Motor neuron (in vitro differentiated cells): ENCODE measurements at regions of chr13 and their contacts with region 1.

Region 1: DNA sequence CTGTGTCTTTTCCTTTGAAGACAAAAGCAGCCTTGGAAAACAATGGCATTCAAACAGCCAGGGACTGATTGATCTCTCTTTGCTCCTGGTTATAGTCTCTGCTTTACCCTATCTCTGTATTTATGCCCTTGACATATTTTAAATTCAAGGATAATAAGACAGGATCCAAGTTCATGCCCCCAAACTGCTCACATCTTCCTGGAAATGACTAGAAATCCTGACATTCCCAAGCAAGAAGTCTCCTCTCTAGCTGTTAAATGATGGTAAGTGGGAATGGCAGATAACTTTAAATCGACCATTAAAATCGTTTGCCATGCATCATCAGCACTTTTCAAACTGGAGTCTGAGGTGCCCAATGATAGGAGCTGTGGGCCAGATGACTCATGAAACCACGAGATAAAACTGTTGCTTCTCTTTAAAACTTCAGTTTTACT is 435.6 kb downstream of the FOXO1 start:
- ATAC-seq: no peak
- H3K4me3 ChIP-seq: no peak overlapping the region
- H3K27ac ChIP-seq: no peak overlapping the region
- H3K4me1 ChIP-seq: peaks cover 12 to 16% of the 10 kb centered on the region in 2 donors

Region 2: DNA sequence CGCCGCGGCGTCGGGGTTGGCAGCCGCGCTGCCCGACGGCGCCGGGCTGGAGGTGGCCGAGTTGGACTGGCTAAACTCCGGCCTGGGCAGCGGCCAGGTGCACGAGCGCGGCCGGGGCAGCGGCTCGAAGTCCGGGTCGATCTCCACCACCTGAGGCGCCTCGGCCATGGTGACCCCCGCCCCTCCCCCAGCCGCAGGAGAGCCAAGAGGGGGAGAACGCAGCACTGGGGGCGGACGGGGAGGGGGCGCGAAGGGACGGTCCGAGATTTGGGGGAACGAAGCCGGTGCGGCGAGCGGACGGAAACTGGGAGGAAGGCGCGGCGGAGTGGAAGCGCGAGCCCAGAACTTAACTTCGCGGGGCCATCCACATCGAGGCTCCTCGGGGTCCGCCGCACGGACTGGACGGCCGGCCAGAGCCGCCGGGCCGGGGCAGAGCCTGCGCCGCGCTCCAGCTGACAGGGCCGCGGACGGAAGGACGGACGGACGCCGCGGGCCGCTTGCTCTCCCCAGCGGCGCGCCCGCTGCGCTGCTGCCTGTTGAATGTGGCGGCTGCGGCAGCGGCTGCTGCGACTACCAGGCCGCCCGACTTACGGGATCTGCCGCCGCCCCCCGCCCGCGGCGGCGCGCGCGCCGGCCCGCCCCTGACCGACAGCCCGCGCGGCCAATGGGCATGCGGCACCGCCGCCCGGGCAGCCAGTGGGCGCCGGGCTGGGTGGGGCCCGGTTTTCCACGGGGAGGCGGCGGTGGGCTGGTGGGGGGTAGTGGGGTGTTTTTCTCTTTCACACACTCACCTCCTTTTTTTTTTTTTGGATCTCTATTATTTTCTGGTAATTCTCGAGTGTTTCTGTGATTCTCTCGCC is 435.4 kb after region 1 on chr13 and contains the start of gene FOXO1:
- in situ Hi-C with region 1: loop called in 1 of 9 experiments (anchors 25 kb)
- ATAC-seq: peak; percentile 62 to 92 (median 86)
- H3K4me3 ChIP-seq: peak within 1 kb of the TSS; percentile 46 to 79 (median 56)
- H3K27ac ChIP-seq: peak within 1 kb of the TSS in 1 of 2 donors; percentile 76
- H3K4me1 ChIP-seq: no peaks in the 10 kb centered on the region
- total RNA-seq, gene FOXO1: 0.63 to 17.3 (median 5.5) TPM